Activated CD4-positive, alpha-beta memory T cell treated with anti-CD3 and anti-CD28 coated beads, Interleukin-2, amount 10 ng/mL, durations not matched to agents 7 days and 5 days (primary cell): ENCODE measurements at regions of chr14 and their contacts with region 1.

Region 1: DNA sequence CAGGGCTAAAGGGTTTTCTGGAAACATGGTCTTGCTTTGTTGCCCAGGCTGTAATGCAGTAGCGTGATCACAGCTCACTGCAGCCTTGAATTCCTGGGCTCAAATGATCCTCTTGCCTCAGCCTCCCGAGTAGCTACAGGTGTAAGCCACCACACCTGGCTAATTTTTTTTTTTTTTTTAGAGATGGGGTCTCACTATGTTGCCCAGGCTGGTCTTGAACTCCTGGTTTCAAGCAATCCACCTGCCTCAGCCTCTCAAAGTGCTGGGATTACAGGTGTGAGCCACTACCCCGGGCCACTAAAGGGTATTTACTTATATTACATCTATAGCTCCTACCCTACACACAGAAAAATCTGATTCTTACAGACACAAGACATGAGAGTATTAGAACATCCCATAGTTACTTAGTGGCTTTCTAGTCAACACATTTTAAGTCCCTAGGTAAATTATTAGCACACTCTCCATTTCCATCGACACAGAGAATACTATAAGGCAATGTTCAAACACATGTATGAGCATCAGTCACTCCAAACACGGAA is 6.2 kb upstream of the DCAF11 start:
- DNase-seq: no peak
- H3K4me3 Mint-ChIP-seq: peak overlapping the region; percentile 8
- H3K27ac Mint-ChIP-seq: peak overlapping the region; percentile 98
- H3K4me1 Mint-ChIP-seq: peaks cover 43% of the 10 kb centered on the region
- H3K27me3 Mint-ChIP-seq: no peaks in the 10 kb centered on the region

Region 2: GRCh38 chr14:23751616-23752015 is 356.8 kb before region 1 on chr14:
- CTCF ChIA-PET with region 1: no interaction called
- POLR2A ChIA-PET with region 1: no interaction called
- DNase-seq: no peak
- H3K4me3 Mint-ChIP-seq: no peak overlapping the region
- H3K27ac Mint-ChIP-seq: no peak overlapping the region
- H3K4me1 Mint-ChIP-seq: no peaks in the 10 kb centered on the region
- H3K27me3 Mint-ChIP-seq: peaks cover 24% of the 10 kb centered on the region

Region 3: GRCh38 chr14:23877538-23878180 is 230.7 kb before region 1 on chr14:
- CTCF ChIA-PET with region 1: no interaction called
- POLR2A ChIA-PET with region 1: no interaction called
- DNase-seq: no peak
- H3K4me3 Mint-ChIP-seq: no peak overlapping the region
- H3K27ac Mint-ChIP-seq: peak overlapping the region; percentile 34
- H3K4me1 Mint-ChIP-seq: peaks cover 9% of the 10 kb centered on the region
- H3K27me3 Mint-ChIP-seq: no peaks in the 10 kb centered on the region

Region 4: DNA sequence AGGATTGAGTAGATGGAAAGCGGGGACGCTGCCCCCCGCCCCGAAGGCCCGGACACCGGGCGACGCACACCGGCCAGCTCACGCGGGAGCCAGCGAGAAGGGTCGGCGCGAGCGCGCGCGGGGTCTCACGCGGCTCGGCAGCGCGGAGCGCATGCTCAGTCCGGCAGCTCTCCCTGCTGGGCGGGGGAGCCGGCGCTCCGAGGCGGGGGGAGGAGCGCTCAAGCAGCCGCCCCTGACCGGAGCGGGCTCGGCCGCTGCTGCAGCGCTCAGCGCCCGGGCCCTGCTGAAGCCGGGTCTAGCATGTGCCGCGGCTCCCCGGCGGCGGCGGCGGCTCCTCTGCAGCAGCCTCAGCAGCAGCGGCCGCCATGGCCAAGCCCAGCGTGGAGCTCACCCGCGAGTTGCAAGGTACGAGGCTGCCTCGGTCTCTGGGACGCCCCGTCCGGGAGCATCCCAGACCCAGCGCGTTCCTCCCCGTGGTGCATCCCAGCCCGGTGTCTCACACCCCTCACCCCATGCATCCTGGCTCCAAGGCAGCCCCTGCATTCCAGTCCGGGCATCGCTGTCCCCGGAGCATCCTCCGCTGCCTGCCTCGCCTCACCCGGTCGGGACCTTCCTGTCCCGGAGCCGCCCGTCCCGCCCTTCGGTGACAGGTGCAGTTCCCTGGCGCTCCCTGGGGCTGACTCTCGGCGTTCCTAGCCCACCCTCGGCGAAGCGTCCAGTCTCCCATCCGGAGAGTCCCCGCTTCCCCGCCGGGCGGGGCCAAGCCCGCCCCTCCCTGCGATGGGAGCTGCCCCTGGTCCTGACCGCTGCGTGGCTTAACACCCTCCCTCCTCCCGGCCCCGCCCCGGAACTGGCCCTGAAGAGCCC is 56.4 kb before region 1 on chr14 and contains the start of gene CARMIL3:
- CTCF ChIA-PET with region 1: interaction called, 164 read pairs
- POLR2A ChIA-PET with region 1: interaction called, 34 read pairs
- DNase-seq: peak; percentile 72
- H3K4me3 Mint-ChIP-seq: peak within 1 kb of the TSS; percentile 69
- H3K27ac Mint-ChIP-seq: no peak within 1 kb of the TSS
- H3K4me1 Mint-ChIP-seq: peaks cover 23% of the 10 kb centered on the region
- H3K27me3 Mint-ChIP-seq: peaks cover 26% of the 10 kb centered on the region
- total RNA-seq, gene CARMIL3: 3.7 to 4.2 TPM

Region 5: GRCh38 chr14:24080888-24081738 is 27.3 kb before region 1 on chr14:
- CTCF ChIA-PET with region 1: interaction called, 33 read pairs
- POLR2A ChIA-PET with region 1: interaction called, 26 read pairs
- DNase-seq: peak; percentile 83
- H3K4me3 Mint-ChIP-seq: peak overlapping the region; percentile 74
- H3K27ac Mint-ChIP-seq: peak overlapping the region; percentile 75
- H3K4me1 Mint-ChIP-seq: peaks cover 32% of the 10 kb centered on the region
- H3K27me3 Mint-ChIP-seq: peaks cover 11% of the 10 kb centered on the region

Region 6: DNA sequence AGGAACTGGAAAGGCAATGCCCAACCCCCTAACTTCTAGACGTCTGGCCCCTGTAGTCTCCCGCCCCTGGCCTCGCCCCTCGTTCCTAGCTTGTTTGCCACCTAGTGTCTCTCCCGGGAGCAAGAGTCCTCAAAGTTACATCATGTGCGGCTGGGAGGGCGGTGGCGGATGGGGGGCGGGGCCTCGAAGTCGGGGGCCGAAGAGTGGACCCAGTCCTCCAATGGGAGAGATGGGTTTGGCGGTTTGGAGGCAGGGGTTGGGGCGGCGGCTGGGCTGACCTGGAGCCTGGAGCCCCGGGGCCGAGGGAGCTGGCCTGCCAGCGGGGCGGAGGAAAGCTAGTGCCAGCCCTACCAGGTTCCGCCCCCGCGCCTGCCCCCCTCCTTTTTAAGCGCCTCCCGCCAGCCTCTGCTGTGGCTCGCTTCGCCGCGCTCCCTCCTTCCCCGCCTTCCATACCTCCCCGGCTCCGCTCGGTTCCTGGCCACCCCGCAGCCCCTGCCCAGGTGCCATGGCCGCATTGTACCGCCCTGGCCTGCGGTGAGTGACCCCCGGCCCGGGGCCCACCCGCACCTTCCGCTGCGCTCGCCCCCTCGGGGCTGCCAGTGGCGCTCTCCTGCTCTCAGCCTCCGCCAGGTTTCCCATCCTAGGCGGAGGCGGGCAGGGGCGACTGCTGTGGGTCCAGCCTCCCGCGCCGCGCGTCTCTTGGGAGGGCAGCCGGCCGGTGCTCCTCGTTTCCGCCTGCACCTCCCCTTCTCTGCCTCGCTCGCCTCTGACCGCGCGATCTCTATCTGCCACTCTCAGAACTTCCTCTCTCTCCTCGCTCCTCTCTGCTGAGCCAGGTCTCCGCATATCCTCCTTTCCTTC is 14.3 kb before region 1 on chr14 and contains the start of gene PCK2:
- CTCF ChIA-PET with region 1: interaction called, 254 read pairs
- POLR2A ChIA-PET with region 1: interaction called, 149 read pairs
- DNase-seq: peak; percentile 87
- H3K4me3 Mint-ChIP-seq: peak within 1 kb of the TSS; percentile 100
- H3K27ac Mint-ChIP-seq: peak within 1 kb of the TSS; percentile 96
- H3K4me1 Mint-ChIP-seq: peaks cover 38% of the 10 kb centered on the region
- H3K27me3 Mint-ChIP-seq: no peaks in the 10 kb centered on the region
- total RNA-seq, gene PCK2: 88.5 to 90.6 TPM

Region 7: GRCh38 chr14:24141097-24141880 is 32.9 kb after region 1 on chr14 and contains the start of gene EMC9:
- CTCF ChIA-PET with region 1: interaction called, 24 read pairs
- POLR2A ChIA-PET with region 1: interaction called, 448 read pairs
- DNase-seq: peak; percentile 100
- H3K4me3 Mint-ChIP-seq: peak within 1 kb of the TSS; percentile 93
- H3K27ac Mint-ChIP-seq: peak within 1 kb of the TSS; percentile 92
- H3K4me1 Mint-ChIP-seq: peaks cover 73% of the 10 kb centered on the region
- H3K27me3 Mint-ChIP-seq: no peaks in the 10 kb centered on the region
- total RNA-seq, gene EMC9: 45.0 to 51.7 TPM